PC-9 (cell line): ENCODE measurements at regions of chr9 and their contacts with region 1.

Region 1: DNA sequence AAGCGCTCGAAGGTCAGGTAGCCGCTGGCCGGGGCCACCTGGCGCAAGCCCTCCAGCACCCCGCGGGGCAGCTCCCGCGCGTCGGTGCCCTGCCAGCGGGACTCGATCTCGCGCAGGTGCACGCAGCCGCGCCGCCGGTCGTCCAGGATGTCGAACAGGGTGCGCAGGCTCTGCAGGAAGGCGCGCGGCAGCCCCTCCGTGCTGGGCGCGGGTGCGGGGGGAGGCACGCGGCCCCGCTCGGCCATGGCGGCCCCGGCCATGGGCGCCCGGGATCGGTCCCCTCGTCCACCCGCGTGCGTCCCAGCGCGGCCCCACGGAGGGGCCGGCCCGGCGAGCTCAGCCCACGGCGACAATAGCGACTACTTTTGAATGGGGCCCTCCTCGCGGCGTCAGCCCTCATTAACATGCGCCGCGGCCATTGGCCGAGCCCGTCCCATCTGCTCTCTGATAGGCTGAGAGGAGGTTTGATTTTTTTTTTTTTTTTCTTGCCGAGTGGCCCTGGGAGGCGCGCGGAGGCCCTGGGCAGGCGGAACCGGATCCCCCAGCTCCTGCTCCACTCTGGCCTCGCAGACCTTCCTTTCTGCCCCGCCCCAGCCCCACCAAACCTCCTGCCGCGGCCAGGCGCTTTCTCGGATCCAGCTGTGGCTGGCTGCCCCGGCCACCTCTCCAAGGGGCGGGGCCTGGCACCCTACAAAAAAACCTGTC is at the start of gene SAPCD2:
- DNase-seq: peak; percentile 87 to 96
- H3K4me3 ChIP-seq: peak within 1 kb of the TSS; percentile 67
- H3K27ac ChIP-seq: no peak within 1 kb of the TSS
- H3K4me1 ChIP-seq: peaks cover 25% of the 10 kb centered on the region
- H3K27me3 ChIP-seq: no peaks in the 10 kb centered on the region
- CTCF ChIP-seq: no peak
- total RNA-seq, gene SAPCD2: 46.9 and 50.3 TPM in 2 replicates

Region 2: DNA sequence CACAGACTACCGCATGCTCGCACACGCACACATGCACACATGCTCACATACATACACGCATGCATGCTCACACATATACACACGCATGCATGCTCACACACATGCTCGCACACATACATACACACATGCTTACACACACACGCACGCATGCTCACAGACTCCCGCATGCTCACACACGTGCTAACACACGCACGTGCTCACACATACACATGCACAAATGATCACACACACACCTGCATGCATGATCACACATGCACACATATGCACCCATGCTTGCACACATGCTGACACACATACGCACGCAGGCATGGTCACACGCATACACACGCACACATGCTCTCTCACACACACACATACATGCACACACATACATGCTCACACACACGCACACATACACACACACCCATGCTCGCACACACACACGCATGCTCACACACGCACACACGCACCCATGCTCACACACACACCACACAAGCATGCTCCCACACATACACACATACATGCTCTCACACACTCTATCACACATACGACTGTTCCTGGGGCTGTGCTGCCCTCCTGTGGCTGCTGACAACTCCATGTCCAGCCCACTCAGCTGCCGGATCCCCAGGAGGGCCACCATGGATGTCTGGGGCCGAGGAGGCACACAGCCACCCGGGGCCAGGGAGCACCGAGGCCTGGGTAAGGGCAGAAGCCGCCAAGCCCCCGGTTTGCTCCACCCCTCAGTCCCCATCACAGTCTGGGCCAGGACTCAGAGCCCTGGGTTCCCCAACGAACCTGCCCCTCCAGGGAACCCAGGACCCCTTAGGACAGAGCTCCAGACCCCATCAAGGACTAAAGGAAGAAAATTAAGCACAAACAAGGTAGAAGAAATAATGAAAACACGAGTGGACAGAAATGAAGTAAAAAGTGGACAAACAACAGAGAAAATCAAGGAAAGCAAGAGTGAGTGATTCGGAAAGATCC is 439.0 kb before region 1 on chr9:
- CTCF ChIA-PET with region 1: no interaction called
- POLR2A ChIA-PET with region 1: no interaction called
- intact Hi-C with region 1: no loop called
- DNase-seq: peak; percentile 52 to 74
- H3K4me3 ChIP-seq: no peak overlapping the region
- H3K27ac ChIP-seq: no peak overlapping the region
- H3K4me1 ChIP-seq: 0 out of 2 replicates have a peak, but pooled peaks cover 3% of the 10 kb centered on the region
- H3K27me3 ChIP-seq: no peaks in the 10 kb centered on the region
- CTCF ChIP-seq: peak; percentile 85

Region 3: GRCh38 chr9:136991993-136992818 is 78.1 kb before region 1 on chr9 and contains the start of gene PAXX:
- CTCF ChIA-PET with region 1: no interaction called
- POLR2A ChIA-PET with region 1: interaction called, 21 read pairs
- intact Hi-C with region 1: no loop called
- DNase-seq: peak; percentile 77 to 97
- H3K4me3 ChIP-seq: peak within 1 kb of the TSS; percentile 88
- H3K27ac ChIP-seq: peak within 1 kb of the TSS; percentile 42
- H3K4me1 ChIP-seq: peaks cover 22% of the 10 kb centered on the region
- H3K27me3 ChIP-seq: no peaks in the 10 kb centered on the region
- CTCF ChIP-seq: no peak
- total RNA-seq, gene PAXX: 54.9 and 78.9 TPM in 2 replicates

Region 4: GRCh38 chr9:137046098-137046787 is 24.1 kb before region 1 on chr9 and contains the start of gene NPDC1:
- CTCF ChIA-PET with region 1: interaction called, 19 read pairs
- POLR2A ChIA-PET with region 1: no interaction called
- intact Hi-C with region 1: no loop called
- DNase-seq: peak; percentile 73 to 91
- H3K4me3 ChIP-seq: peak within 1 kb of the TSS; percentile 92
- H3K27ac ChIP-seq: no peak within 1 kb of the TSS
- H3K4me1 ChIP-seq: peaks cover 15% of the 10 kb centered on the region
- H3K27me3 ChIP-seq: peaks cover 6% of the 10 kb centered on the region
- CTCF ChIP-seq: peak; percentile 87
- total RNA-seq, gene NPDC1: 89.8 and 137 TPM in 2 replicates

Region 5: GRCh38 chr9:137114610-137115391 is 44.4 kb after region 1 on chr9 and contains the start of gene DPP7:
- CTCF ChIA-PET with region 1: interaction called, 5 read pairs
- POLR2A ChIA-PET with region 1: no interaction called
- intact Hi-C with region 1: loop called (anchors 1 kb)
- DNase-seq: peak in 1 of 2 experiments; percentile 74
- H3K4me3 ChIP-seq: peak within 1 kb of the TSS; percentile 72
- H3K27ac ChIP-seq: no peak within 1 kb of the TSS
- H3K4me1 ChIP-seq: peaks cover 6% of the 10 kb centered on the region
- H3K27me3 ChIP-seq: no peaks in the 10 kb centered on the region
- CTCF ChIP-seq: no peak
- total RNA-seq, gene DPP7: 104 and 126 TPM in 2 replicates

Region 6: DNA sequence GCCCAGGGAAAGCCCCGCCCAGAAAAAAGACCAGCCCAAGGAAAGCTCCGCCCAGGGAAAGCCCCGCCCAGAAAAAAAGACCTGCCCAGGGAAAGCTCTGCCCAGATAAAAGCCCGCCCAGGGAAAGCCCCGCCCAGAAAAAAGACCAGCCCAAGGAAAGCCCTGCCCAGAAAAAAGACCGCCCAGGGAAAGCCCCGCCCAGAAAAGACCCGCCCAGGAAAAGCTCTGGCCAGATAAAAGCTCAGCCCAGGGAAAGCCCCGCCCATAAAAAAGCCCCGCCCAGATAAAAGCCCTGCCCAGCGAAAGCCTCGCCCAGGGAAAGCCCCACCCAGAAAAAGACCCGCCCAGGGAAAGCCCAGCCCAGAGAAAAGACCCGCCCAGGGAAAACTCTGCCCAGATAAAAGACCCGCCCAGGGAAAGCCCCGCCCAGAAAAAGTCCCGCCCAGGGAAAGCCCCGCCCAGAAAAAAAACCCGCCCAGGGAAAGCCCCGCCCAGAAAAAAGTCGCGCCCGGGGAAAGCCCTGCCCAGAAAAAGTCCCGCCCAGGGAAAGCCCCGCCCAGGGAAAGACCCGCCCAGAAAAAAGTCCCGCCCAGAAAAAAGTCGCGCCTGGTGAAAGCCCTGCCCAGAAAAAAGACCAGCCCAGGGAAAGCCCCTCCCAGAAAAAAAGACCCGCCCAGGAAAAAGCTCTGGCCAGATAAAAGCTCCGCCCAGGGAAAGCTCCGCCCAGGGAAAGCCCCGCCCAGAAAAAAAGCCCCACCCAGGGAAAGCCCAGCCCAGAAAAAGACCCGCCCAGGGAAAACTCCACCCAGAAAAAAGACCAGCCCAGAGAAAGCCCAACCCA is 80.5 kb after region 1 on chr9:
- CTCF ChIA-PET with region 1: no interaction called
- POLR2A ChIA-PET with region 1: interaction called, 10 read pairs
- intact Hi-C with region 1: no loop called
- DNase-seq: peak; percentile 76 to 85
- H3K4me3 ChIP-seq: no peak overlapping the region
- H3K27ac ChIP-seq: no peak overlapping the region
- H3K4me1 ChIP-seq: peaks cover 11% of the 10 kb centered on the region
- H3K27me3 ChIP-seq: no peaks in the 10 kb centered on the region
- CTCF ChIP-seq: no peak

Region 7: DNA sequence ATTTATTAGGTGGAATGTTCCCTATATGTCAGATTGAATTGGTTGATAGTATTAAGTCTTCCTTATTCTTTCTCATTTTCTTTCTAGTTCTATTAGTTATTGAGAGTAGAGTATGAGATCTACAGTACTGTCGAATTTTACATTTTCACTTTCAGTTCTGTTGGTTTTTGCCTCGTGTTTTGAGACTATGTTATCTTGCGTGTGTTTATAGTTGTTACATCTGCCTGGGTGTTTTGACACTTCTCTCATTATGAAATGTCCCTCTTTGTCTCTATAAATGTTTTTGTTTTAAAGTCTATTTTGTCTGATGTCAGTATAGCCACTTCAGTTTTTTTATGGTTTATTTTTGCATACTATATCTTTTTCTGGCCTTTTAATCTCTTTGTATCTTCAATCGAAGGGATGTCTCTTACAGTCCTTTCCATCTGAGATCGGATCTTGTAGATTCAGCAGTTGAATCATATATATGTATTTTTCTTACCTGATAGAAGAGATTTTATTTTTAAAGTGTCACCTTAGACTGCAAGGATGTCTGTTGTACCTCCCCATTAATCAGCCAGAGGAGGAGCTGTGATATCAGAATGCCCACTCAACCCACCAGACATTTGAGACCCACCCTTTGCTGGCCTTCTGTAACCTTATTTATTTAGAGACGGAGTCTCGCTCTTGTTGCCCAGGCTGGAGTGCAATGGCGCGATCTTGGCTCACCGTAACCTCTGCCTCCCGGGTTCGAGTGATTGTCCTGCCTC is 569.1 kb after region 1 on chr9:
- CTCF ChIA-PET with region 1: no interaction called
- POLR2A ChIA-PET with region 1: no interaction called
- intact Hi-C with region 1: no loop called
- DNase-seq: no peak
- H3K4me3 ChIP-seq: no peak overlapping the region
- H3K27ac ChIP-seq: no peak overlapping the region
- H3K4me1 ChIP-seq: no peaks in the 10 kb centered on the region
- H3K27me3 ChIP-seq: no peaks in the 10 kb centered on the region
- CTCF ChIP-seq: no peak